ENCODE measurements at regions of chr2 and their contacts with region 1.

Region 1: DNA sequence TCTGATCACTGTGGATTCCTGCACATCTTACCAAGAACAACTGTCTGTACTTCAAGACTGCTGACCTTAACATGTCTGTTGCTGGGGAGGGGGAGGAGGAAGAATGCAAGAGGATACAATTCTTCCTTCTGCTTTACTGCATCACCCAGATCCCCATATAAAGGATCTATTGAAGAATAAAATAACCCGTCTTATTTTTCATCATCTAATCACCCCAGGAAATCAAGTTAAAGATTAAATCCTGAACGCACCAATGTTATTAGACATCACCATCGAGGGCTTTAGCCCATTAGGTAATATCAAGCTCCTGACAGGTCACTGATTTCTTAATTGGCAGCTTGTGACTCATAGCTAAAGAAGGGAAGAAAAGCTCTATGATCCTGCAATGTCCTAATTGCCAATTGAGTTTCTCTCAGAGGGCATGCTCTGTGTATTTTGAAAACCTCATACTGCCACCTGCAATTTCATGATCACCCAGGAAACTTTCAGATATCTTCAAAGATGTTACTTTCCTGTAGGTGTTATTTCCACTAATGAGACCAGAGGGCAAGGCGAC is 75.4 kb upstream of the KCNE4 start:
- DNase-seq: peak; percentile 34
- H3K4me3 ChIP-seq: no peak overlapping the region
- H3K27ac ChIP-seq: no peak overlapping the region
- H3K4me1 ChIP-seq: peaks cover 29% of the 10 kb centered on the region
- H3K27me3 ChIP-seq: no peaks in the 10 kb centered on the region
- CTCF ChIP-seq: no peak

Region 2: GRCh38 chr2:223051693-223052289 is 75.2 kb after region 1 on chr2 and contains the start of gene KCNE4:
- CTCF ChIA-PET with region 1: interaction called, 7 read pairs
- POLR2A ChIA-PET with region 1: interaction called, 15 read pairs
- intact Hi-C with region 1: loop called (anchors 5 kb)
- DNase-seq: peak; percentile 91
- H3K4me3 ChIP-seq: peak within 1 kb of the TSS; percentile 69
- H3K27ac ChIP-seq: peak within 1 kb of the TSS; percentile 94
- H3K4me1 ChIP-seq: peaks cover 60% of the 10 kb centered on the region
- H3K27me3 ChIP-seq: no peaks in the 10 kb centered on the region
- CTCF ChIP-seq: no peak
- total RNA-seq, gene KCNE4: 68.0 and 82.5 TPM in 2 replicates

Region 3: GRCh38 chr2:223101340-223102039 is 124.9 kb after region 1 on chr2:
- CTCF ChIA-PET with region 1: interaction called, 14 read pairs
- POLR2A ChIA-PET with region 1: no interaction called
- intact Hi-C with region 1: loop called (anchors 5 kb)
- DNase-seq: peak; percentile 70
- H3K4me3 ChIP-seq: no peak overlapping the region
- H3K27ac ChIP-seq: peak overlapping the region; percentile 31
- H3K4me1 ChIP-seq: peaks cover 46% of the 10 kb centered on the region
- H3K27me3 ChIP-seq: no peaks in the 10 kb centered on the region
- CTCF ChIP-seq: peak; percentile 68

Region 4: DNA sequence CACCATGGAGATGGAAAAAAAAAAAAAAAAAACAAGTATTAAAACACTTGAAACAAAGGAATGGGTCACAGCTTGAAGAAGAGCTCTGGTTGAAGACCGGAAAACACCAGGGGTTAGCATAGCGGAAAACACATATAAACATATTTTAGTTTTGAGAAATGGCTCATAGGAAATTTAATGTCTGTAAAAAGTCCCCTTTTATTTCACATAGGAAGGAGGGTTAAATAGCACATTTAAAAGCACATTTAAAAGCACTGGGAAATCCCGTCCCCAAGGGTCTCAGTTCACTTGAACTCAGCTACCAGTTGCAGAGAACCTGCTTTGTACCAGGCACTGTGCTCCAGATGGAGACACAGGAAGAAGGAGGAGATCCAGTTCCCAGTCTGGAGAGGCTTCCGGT is 140.9 kb after region 1 on chr2:
- CTCF ChIA-PET with region 1: no interaction called
- POLR2A ChIA-PET with region 1: interaction called, 3 read pairs
- intact Hi-C with region 1: loop called (anchors 5 kb)
- DNase-seq: peak; percentile 98
- H3K4me3 ChIP-seq: no peak overlapping the region
- H3K27ac ChIP-seq: peak overlapping the region; percentile 79
- H3K4me1 ChIP-seq: peaks cover 93% of the 10 kb centered on the region
- H3K27me3 ChIP-seq: no peaks in the 10 kb centered on the region
- CTCF ChIP-seq: no peak

Region 5: DNA sequence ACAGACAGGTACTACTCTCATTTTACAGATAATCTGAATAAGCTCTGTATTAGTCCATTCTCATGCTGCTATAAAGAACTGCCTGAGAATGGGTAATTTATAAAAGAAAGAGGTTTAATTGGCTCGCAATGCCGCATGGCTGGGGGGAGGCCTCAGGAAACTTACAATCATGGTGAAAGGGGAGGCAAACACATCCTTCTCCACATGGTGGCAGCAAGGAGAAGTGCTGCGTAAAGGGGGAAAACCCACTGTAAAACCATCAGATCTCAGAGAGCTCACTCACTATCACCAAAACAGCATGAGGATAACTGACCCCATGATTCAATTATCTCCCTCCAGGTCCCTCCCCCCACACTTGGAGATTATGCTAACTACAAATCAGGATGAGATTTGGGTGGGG is 329.8 kb after region 1 on chr2:
- CTCF ChIA-PET with region 1: no interaction called
- POLR2A ChIA-PET with region 1: no interaction called
- intact Hi-C with region 1: loop called (anchors 5 kb)
- DNase-seq: peak; percentile 74
- H3K4me3 ChIP-seq: no peak overlapping the region
- H3K27ac ChIP-seq: no peak overlapping the region
- H3K4me1 ChIP-seq: no peaks in the 10 kb centered on the region
- H3K27me3 ChIP-seq: no peaks in the 10 kb centered on the region
- CTCF ChIP-seq: peak; percentile 74

Region 6: GRCh38 chr2:223613017-223613950 is 636.7 kb after region 1 on chr2:
- CTCF ChIA-PET with region 1: no interaction called
- POLR2A ChIA-PET with region 1: interaction called, 3 read pairs
- intact Hi-C with region 1: loop called (anchors 10 kb)
- DNase-seq: peak; percentile 98
- H3K4me3 ChIP-seq: peak overlapping the region; percentile 39
- H3K27ac ChIP-seq: peak overlapping the region; percentile 69
- H3K4me1 ChIP-seq: peaks cover 38% of the 10 kb centered on the region
- H3K27me3 ChIP-seq: no peaks in the 10 kb centered on the region
- CTCF ChIP-seq: no peak

Region 7: GRCh38 chr2:223674998-223675609 is 698.5 kb after region 1 on chr2:
- CTCF ChIA-PET with region 1: no interaction called
- POLR2A ChIA-PET with region 1: no interaction called
- intact Hi-C with region 1: no loop called
- DNase-seq: peak; percentile 58
- H3K4me3 ChIP-seq: no peak overlapping the region
- H3K27ac ChIP-seq: peak overlapping the region; percentile 38
- H3K4me1 ChIP-seq: peaks cover 5% of the 10 kb centered on the region
- H3K27me3 ChIP-seq: no peaks in the 10 kb centered on the region
- CTCF ChIP-seq: peak; percentile 67

Measured in A673 (cell line).